GM10248 (cell line): ENCODE measurements at regions of chr1 and their contacts with region 1.

Region 1: DNA sequence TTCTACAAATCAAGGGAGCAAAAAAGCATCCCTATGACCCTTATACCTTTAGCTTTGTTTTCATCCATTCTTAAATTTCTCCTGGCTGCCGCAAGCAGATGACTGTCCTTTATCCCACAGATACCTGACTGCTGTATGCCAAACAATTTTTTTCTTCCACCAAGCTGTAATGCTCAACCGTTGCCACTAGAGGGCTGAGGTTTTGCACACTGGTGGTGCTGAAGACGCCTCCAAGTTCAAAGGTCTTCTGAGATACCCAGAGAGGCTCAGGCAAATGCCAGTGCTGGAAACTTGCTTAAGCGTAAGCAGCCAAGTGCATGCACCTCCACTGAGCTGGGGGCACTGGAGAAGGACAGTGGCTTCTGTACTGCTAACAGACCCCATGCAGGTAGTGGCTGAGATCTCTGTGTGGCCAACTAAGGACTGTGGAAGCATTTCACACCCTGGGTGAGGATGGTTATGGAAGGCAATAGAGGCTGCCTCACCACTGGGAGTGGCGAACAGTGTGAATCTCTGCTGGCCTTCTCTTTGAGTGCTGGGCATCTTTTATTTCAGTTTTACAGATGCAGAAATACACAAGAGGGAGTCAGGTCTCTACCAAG is 28.5 kb downstream of the CNIH3 start:
- DNase-seq: peak; percentile 75
- CTCF ChIP-seq: peak; percentile 91

Region 2: GRCh38 chr1:224592636-224593582 is 51.7 kb before region 1 on chr1:
- CTCF ChIA-PET with region 1: interaction called, 10 read pairs
- POLR2A ChIA-PET with region 1: no interaction called
- DNase-seq: peak; percentile 17
- CTCF ChIP-seq: no peak

Region 3: GRCh38 chr1:224632381-224632871 is 12.2 kb before region 1 on chr1:
- CTCF ChIA-PET with region 1: interaction called, 17 read pairs
- POLR2A ChIA-PET with region 1: no interaction called
- DNase-seq: no peak
- CTCF ChIP-seq: no peak

Region 4: DNA sequence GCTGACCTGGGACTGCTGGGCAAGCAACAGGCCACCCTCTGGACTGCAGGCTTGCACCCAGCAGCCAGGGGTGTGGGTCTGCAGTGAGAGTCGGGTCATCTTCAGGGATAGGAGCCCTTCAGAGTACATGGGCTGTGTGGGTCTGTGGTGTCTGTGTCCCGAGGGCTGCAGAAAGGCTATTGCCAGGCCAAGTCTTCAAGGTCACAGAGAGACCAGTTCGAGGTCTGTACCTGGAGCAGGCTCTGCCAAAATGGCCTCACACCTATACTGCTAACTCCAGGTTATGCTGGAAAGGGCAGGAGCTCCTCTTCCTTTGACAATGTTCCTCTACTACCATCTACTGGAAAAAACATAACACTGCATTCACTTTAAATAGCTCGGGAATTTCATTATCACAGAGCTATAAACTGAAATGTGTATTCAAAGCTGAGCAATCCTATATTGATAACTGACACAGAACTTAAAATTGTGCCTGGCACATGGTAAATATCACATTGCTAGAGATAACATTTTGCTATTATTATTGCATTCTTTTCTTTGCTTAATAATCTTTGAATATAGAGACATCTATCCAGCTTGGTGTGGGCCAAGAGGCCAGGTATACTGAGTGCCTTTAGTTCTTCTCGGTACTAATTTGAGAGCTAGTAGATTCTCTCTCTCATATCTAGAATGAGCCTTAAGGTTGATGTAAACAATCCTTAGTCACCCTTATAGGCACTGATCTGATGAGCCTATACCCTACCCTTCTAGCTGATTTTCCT is 277.9 kb after region 1 on chr1:
- CTCF ChIA-PET with region 1: interaction called, 16 read pairs
- POLR2A ChIA-PET with region 1: no interaction called
- DNase-seq: peak; percentile 56
- CTCF ChIP-seq: peak; percentile 54